ENCODE measurements at regions of chrX and their contacts with region 1.

Region 1: DNA sequence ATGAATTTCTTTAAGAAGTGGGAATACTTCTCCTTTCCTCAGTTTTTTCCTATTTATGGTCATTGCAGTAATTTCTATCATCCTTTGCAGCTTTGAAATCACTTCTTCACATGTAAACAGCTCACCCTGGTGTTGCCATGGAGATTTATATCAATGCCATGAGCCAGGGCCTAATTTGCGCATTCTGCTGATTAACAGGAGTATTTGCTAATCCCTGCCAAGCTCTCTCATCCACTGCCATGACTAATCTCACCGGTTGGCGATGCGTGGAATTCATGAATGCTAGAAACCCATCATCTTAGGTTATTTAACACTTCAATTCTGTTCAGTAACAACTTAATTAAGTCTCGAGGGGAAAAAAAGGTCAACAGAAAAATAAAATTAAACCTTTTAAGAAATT is 11.8 kb upstream of the FGF13 start:
- DNase-seq: no peak

Region 2: GRCh38 chrX:137695417-137695816 is 1027.9 kb before region 1 on chrX:
- intact Hi-C with region 1: loop called in 1 of 2 experiments (anchors 5 kb)
- DNase-seq: no peak

Region 3: DNA sequence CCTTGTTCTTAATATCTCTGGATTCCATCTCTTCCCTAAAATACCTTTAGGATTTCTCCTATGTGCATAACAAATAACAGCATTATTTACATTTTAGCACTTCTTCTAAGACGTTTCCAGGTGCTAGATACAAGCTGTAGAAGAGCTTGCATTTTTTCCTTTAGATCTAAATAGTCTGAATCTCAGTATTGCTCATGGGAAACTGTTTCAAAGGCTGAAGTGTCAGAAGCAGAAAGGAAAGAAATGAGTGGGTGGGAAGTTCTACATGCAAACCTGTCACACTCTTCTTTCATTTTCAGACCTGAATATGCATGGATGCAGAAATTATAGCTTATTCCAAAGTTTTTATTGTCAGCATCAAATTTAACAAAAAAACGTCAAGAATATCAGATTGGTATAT is 53.6 kb before region 1 on chrX:
- intact Hi-C with region 1: no loop called
- DNase-seq: no peak